Ovary (tissue), 10 donors: ENCODE measurements at regions of chr12 and their contacts with region 1.

Region 1: DNA sequence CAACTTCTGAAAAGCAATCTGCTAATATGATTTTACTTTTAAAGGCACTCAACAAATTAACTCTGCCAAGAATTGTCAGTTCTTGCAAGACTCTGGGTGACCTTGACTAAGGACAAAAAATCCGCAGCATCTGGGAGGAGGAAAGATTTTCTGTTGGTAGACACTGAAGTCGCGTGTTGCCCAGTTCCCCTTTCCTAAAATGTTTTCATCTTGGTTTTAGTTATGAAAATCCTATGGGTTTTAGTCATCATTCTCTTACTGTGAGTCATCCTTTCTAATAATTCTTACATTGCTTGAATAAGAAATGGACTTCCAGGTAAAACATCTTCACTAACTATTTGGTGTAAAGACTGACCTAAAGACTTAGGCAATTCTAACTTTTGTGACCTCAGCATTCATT is 9.1 kb downstream of the GSG1 start:
- DNase-seq: no peak
- H3K4me3 ChIP-seq: no peak overlapping the region
- H3K27ac ChIP-seq: no peak overlapping the region
- H3K4me1 ChIP-seq: peaks cover 5% of the 10 kb centered on the region
- H3K27me3 ChIP-seq: no peaks in the 10 kb centered on the region
- CTCF ChIP-seq: no peak
- EP300 ChIP-seq: no peak
- POLR2A ChIP-seq: no peak

Region 2: DNA sequence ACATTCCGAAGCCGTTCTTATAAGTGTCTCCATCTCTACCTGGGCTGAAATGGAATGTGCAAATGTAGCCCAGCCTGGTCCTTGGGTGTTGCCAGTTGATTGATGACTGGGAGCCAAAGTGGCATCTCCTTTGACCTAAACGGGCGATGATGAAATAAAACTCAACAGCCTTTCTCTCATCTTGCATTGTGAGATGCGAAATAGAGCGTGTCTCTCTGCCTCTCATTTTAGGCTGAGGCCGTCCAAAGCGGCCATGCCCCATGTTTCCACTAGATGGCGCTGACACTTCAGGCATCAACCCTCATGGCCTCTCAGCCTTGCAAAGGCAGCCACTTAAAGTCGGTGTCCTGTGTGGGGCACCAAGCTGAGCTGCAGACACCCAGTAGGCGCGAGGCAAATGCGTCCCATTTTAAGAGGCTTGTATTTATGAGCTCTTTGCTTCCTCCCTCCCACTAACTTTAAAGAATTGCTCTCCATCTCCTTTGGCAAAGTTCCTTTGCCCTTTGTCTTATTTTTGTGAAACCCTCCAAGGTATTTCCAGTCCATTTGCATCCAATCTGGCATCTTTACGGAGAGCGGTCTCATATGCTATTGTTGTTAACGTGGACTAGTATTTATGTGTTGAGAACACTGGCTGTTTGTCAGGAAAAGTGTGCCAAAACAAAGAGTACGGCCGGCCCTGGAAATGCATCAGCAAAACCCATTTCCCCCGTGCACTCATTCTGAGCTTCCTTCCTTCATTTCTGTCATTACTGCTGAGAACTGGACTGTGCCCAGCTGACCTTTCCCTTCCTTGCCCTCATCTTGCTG is 178.0 kb before region 1 on chr12:
- intact Hi-C with region 1: loop called in 2 of 4 experiments (anchors 5 to 10 kb)
- DNase-seq: peak; percentile 81 to 92 (median 90)
- H3K4me3 ChIP-seq: no peak overlapping the region
- H3K27ac ChIP-seq: peak overlapping the region; percentile 45 to 49
- H3K4me1 ChIP-seq: peaks cover 13% of the 10 kb centered on the region
- H3K27me3 ChIP-seq: no peaks in the 10 kb centered on the region
- CTCF ChIP-seq: peak; percentile 92 to 98 (median 94)
- EP300 ChIP-seq: no peak
- POLR2A ChIP-seq: no peak

Region 3: DNA sequence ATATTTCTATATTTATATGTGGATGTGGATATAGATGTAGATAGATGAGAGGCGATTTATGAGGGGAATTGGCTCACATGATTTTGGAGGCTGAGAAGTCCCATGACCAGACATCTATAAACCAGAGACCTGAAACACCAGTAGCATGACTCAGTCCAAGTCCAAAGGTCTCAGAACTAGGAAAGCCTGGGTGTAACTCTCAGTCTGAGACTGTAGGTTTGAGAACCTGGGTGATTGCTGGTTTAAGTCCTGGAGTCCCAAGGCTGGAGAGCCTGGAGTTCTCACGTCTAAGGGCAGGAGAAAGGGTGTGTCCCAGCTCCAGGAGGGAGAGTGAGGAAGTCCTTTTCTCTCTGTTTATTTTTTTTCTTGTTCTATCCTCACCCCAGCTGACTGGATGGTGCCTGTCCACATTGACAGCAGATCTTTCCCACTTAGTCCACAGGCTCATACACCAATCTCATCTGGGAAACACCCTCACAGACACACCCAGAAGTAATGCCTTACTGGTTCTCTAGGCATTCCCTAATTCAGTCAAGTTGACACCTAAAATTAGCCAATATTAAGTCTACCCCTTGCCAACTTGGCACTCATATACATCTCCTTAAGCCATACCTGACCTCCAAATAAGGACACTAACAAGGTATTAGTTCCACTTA is 147.6 kb after region 1 on chr12:
- intact Hi-C with region 1: no loop called
- DNase-seq: no peak
- H3K4me3 ChIP-seq: no peak overlapping the region
- H3K27ac ChIP-seq: no peak overlapping the region
- H3K4me1 ChIP-seq: no peaks in the 10 kb centered on the region
- H3K27me3 ChIP-seq: no peaks in the 10 kb centered on the region
- CTCF ChIP-seq: no peak
- EP300 ChIP-seq: no peak
- POLR2A ChIP-seq: no peak

Region 4: DNA sequence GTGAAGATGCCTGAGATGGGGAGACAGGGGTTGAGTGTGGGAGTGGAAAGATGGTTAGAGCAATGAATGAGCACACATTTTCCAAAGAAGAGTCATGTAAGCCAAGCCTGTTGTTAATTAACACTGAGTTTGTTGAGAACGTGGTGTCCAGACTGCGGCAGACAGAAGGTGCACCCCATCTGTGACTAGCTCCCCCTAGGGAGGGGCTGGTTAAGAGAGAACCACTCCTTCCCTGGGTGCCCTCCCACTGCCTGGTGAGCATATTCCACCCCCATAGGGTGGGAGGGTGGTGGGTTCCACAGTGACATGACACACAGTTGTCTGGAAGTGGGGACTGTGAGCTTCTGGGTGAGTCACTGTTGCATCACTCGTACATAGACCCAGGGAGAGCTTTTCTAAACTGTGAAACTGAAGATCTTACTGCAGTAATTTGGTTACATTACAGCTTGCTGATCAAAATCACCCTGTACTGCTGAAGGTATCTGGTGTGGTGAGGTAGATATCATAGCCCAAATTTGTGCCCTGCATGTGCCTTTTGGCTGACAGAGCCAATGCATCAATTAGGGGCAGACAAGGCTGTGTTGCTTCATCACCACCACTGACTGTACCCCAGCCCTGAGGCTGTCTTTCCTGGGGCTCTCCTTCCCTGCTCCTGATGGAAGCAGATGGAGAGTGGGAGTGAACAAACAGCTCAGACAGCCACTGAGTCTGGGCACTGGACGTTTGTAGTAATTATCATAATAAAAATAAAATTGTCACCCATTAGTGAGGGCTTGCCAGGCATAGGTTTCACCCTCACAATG is 253.1 kb after region 1 on chr12:
- intact Hi-C with region 1: no loop called
- DNase-seq: no peak
- H3K4me3 ChIP-seq: no peak overlapping the region
- H3K27ac ChIP-seq: no peak overlapping the region
- H3K4me1 ChIP-seq: no peaks in the 10 kb centered on the region
- H3K27me3 ChIP-seq: no peaks in the 10 kb centered on the region
- CTCF ChIP-seq: no peak
- EP300 ChIP-seq: no peak
- POLR2A ChIP-seq: no peak